Vagina (tissue), 2 donors: ENCODE measurements at regions of chr4 and their contacts with region 1.

Region 1: DNA sequence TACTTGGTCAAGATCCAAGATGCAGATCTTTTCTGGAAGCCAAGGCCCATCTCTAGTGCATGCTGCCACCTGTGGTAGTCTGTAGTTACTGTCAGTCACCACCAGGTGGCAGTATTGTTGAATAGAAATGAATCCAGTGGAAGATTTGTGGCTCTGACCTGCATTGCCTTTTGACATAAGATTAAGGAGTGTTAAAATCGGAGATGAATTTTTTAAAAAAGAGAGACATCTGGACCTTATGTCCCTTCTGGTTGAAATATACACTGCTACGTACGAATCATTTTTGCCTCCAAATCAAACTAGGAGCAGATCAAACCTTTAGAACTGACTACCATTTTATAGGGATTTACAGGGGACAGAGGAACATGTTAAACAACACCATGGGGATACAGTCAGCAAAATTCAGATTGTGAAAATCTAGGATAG is 46.9 kb upstream of the RHOH start:
- DNase-seq: no peak
- H3K4me3 ChIP-seq: no peak overlapping the region
- H3K27ac ChIP-seq: no peak overlapping the region
- H3K4me1 ChIP-seq: no peaks in the 10 kb centered on the region
- H3K27me3 ChIP-seq: no peaks in the 10 kb centered on the region
- CTCF ChIP-seq: peak; percentile 79 to 83 (median 79)
- POLR2A ChIP-seq: no peak

Region 2: DNA sequence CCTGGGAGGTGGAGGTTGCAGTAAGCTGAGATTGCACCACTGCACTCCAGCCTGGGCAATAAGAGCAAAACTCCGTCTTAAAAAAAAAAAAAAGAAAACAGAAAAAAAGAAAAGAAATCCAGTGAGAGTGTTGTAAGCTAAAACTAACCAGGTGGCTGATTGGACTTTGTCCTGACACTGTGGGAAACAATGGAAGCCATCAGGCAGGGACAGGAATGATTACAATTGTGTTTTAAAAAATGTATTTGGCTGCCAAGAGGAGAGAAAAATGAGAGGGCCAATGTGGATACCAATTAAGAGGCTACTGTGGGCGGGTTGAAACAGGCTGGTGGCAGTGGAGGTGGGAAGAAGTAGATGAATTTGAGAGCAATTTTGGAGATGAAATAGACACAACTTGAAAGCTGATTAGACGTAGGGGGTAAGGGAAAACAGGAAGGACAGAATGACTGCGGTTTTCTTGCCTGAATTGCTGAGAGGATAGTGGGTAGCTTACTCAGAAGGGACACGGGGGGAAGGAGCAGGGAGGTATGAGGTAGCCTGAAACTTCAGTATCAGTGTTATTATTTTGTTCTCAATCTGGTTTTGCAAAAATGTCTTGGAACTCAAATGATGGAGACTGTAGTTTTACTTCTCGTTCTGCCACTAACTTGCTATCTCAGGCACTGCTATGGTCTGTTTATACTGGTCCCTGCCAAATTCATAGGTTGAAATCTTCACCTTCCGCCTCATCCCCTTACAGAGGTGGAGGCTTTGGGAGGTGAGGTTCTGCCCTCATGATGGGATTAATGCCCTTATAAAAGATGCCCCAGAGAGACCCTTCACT is 139.6 kb after region 1 on chr4:
- intact Hi-C with region 1: loop called (anchors 10 kb)
- DNase-seq: no peak
- H3K4me3 ChIP-seq: no peak overlapping the region
- H3K27ac ChIP-seq: no peak overlapping the region
- H3K4me1 ChIP-seq: no peaks in the 10 kb centered on the region
- H3K27me3 ChIP-seq: no peaks in the 10 kb centered on the region
- CTCF ChIP-seq: no peak
- POLR2A ChIP-seq: no peak